GM18951 (cell line): ENCODE measurements at regions of chr16 and their contacts with region 1.

Region 1: DNA sequence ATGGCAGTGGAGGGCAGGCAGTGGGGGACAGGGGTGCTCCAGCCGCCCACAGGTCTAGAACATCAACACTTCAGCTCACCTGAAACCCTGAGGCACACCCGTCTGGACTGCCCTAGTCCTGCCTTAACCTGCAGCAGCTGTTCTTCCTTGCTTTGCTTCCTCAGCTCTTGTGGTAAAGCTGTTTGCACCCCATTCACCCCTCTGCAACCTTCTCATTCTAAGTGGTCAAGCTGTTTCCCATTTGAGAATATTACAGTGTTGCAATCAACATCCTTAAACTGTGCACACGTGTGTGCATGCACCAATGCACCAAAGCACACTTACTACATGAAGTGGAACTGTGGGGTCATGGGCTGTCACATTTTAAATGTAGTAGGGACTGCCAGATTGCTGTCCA is 32.4 kb downstream of the SCNN1B start:
- POLR2A ChIP-seq: no peak

Region 2: DNA sequence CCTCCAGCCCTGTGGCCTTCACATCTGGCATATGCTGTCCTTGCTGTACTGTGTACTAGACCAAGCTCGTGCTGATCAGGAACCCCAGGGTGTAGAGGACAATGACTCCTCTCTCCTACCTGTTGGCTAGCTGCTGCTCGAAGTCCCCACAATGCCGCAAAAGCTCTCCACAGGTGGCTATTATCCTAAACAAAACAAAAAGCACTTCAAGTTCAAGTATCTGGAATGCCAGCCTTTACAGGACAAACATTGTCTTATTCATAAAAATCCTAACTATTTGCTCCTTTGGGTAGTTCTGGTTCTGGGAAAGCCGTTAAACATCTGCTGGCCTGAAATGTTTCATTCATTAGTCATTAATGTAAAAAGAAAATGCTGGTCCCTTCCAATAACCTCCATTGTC is 75.7 kb after region 1 on chr16:
- in situ Hi-C with region 1: loop called (anchors 10 kb)
- POLR2A ChIP-seq: no peak